ENCODE measurements at regions of chr4 and their contacts with region 1.

Region 1: DNA sequence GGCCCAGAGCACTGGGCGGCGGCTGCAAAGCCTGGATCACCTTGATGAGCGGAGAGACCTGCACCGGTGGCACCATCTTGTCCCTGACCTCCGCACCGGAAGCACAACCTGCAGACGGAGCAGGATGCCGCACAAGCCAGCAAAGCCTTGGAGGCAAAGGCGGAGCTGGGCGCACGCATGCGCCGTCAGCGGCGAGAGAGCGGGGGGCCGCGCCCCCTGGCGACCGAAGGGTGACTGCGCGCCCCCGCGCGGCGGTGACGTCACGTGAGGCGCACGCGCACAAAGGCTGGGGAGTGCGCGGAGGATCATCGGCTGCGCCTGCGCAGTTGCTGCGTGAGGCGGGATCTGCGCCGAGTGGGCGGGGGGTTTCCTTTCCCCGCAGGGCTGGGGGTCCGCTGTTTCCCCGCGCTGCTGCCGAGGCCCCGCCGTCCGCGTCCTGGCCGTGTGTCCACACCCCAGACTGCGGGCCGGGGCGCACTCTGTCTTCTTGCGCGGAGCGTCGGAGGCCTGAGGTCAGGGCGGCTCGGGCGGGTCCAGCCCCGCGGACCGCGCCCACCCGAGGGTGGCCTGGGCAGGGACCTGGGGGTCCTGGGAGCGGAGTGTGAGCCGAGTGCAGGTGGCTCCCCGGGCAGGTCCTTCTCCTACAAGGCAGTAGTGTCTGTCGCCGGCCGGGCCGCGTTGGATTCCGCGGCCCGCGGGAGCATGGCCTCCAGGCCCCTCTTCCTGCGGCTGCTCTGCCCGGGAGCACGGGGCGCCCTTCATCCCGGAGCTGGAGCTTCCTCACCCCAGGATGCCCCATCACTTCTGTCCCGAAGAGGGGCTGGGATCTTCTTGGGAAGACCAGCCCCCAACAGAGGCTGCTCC is at the starts of genes ATP5ME and MYL5:
- DNase-seq: peak; percentile 97 to 100 (median 99)
- ATAC-seq: peak; percentile 96
- H3K4me3 ChIP-seq: peak within 1 kb of the TSS; percentile 88
- H3K4me3 Mint-ChIP-seq: peak within 1 kb of the TSS; percentile 84 to 92 (median 88)
- H3K27ac ChIP-seq: peak within 1 kb of the TSS; percentile 100
- H3K27ac Mint-ChIP-seq: peak within 1 kb of the TSS; percentile 80 to 91 (median 89)
- H3K4me1 ChIP-seq: peaks cover 7 to 16% of the 10 kb centered on the region in 2 donors
- H3K4me1 Mint-ChIP-seq: peaks cover 7 to 15% (median 8%) of the 10 kb centered on the region in 7 donors
- H3K27me3 ChIP-seq: no peaks in the 10 kb centered on the region
- H3K27me3 Mint-ChIP-seq: no peaks in the 10 kb centered on the region
- total RNA-seq, gene ATP5ME: 115 to 183 (median 123) TPM
- total RNA-seq, gene MYL5: 19.9 to 32.7 (median 23.8) TPM

Region 2: DNA sequence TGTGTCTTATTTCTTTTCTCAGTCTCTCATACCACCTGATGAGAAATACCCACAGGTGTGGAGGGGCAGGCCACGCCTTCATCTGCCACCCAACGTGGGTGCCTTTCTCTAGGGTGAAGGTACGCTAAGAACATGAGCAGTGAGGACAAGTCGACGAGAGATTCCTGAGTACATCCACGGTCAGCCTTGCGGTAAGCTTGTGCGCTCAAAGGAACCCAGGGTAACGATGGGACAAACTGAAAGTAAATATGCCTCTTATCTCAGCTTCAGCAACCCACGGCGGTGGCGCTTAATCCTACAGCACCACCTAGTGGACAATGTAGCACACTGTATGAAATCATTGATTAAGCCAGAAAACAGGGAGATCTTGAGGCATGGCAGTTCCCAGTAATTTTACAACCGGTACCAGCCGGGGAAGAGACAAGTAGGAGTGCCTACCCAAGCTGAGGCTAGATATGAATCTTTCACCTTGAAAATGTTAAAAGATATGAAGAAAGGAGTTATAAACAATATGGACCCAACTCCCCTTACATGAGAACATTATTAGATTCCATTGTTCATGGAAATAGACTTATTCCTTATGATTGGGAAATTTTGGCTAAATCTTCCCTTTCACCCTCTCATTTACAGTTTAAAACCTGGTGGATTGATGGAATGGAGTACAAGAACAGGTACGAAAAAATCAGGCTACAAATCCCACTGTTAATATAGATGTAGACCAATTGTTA is 432.1 kb before region 1 on chr4:
- CTCF ChIA-PET with region 1: no interaction called
- POLR2A ChIA-PET with region 1: interaction called, 3 read pairs
- intact Hi-C with region 1: loop called (anchors 1 kb)
- DNase-seq: peak; percentile 43 to 80 (median 71)
- ATAC-seq: peak; percentile 100
- H3K4me3 ChIP-seq: peak overlapping the region; percentile 72
- H3K4me3 Mint-ChIP-seq: peak overlapping the region; percentile 66 to 95 (median 90)
- H3K27ac ChIP-seq: peak overlapping the region; percentile 58
- H3K27ac Mint-ChIP-seq: peak overlapping the region; percentile 80 to 89 (median 85)
- H3K4me1 ChIP-seq: no peaks in the 10 kb centered on the region
- H3K4me1 Mint-ChIP-seq: peaks cover 10 to 13% (median 11%) of the 10 kb centered on the region in 7 donors
- H3K27me3 ChIP-seq: no peaks in the 10 kb centered on the region
- H3K27me3 Mint-ChIP-seq: no peaks in the 10 kb centered on the region

Region 3: DNA sequence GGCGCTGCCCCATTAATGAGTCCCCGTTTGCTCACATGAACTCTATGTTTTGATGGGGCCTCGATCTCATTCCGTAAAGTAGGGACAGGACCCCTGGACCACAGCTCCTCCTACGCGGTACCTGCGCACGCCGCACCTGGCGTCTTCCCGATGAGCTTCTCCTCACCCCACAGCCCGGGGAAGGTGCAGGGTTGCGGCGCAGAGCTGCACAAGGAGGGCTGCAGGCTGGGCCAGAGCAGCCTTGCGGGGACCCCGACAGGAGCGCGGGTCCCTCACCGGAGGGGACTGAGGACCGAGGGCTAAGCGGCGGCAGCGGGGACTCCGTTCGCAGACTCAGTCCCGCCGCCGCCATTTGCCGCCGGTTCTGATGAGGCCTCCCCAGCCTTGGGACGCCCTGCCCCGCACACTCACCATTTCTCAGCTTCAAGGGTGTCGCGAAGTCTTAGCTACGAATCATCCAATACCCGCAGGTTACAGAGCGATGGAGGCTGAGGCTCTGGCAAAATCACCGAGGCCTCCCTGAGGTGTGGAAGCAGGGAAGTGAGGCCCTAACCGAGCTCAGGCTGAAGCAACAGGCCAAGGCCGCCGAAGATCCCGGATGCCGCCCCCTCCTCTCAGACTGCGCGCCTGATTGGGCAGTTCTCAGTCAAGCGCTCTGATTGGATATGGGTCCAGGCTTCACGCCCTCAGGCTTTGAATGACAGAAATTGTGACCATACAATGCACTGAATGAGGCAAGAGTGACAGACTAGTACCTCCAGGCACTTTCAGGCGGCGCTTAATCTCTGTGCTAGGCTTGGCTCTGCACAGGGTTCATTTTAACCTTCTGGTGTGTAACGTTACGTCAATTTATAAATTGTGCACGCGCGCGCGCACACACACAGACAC is 200.6 kb before region 1 on chr4:
- CTCF ChIA-PET with region 1: no interaction called
- POLR2A ChIA-PET with region 1: interaction called, 3 read pairs
- intact Hi-C with region 1: loop called (anchors 1 kb)
- DNase-seq: peak; percentile 78 to 98 (median 96)
- ATAC-seq: peak; percentile 99
- H3K4me3 ChIP-seq: peak overlapping the region; percentile 93
- H3K4me3 Mint-ChIP-seq: peak overlapping the region; percentile 93 to 99 (median 98)
- H3K27ac ChIP-seq: peak overlapping the region; percentile 92
- H3K27ac Mint-ChIP-seq: peak overlapping the region; percentile 98 to 100 (median 100)
- H3K4me1 ChIP-seq: peaks cover 5 to 7% of the 10 kb centered on the region in 2 donors
- H3K4me1 Mint-ChIP-seq: peaks cover 17 to 47% (median 37%) of the 10 kb centered on the region in 7 donors
- H3K27me3 ChIP-seq: no peaks in the 10 kb centered on the region
- H3K27me3 Mint-ChIP-seq: no peaks in the 10 kb centered on the region

Region 4: GRCh38 chr4:650951-651883 is 23.2 kb before region 1 on chr4:
- CTCF ChIA-PET with region 1: no interaction called
- POLR2A ChIA-PET with region 1: no interaction called
- intact Hi-C with region 1: no loop called
- DNase-seq: no peak
- ATAC-seq: no peak
- H3K4me3 ChIP-seq: no peak overlapping the region
- H3K4me3 Mint-ChIP-seq: no peak overlapping the region
- H3K27ac ChIP-seq: no peak overlapping the region
- H3K27ac Mint-ChIP-seq: no peak overlapping the region
- H3K4me1 ChIP-seq: no peaks in the 10 kb centered on the region
- H3K4me1 Mint-ChIP-seq: peaks cover 0 to 5% (median 2%) of the 10 kb centered on the region in 7 donors
- H3K27me3 ChIP-seq: no peaks in the 10 kb centered on the region
- H3K27me3 Mint-ChIP-seq: peaks cover 0 to 27% (median 6%) of the 10 kb centered on the region in 5 donors

Region 5: DNA sequence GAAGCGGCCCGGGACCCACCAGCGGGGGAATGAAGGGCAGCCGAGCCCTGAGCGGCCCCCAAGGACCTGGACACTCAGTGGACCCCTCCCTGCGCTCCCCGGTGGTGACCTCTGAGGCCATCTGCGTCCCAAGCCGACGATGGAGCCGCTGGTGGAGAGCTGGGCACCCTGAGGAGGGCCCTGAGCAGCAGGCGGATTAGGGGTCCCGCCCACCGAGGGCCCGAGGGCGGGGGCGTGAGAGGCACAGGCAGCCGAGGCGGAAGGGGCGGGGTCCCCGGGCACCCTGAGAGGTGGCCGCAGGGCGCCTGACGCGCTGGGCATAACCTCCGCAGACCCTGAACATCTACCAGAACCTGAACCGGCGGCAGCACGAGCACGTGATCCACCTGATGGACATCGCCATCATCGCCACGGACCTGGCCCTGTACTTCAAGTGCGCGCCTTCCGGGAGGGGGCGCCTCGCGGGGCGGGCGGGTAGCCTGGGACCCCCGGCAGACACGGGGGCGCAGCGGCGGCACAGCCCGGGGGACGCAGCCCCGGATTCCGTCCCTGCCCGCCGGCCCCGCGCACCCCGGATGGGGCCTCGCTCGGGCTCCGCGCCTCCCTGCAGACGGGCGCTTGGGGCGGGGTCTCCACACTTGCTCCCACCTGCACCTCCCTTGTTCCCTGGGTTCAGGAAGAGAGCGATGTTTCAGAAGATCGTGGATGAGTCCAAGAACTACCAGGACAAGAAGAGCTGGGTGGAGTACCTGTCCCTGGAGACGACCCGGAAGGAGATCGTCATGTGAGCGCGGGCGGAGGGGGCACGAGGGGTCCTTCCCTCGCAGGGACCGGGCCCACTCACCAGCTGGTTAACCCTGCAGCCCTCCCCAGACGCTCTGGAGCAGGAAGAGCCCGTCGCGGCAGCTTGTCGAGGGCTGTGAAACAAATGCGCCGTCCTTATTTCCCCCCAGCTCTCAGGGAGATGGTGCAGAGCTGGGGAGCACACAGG is 10.7 kb before region 1 on chr4:
- CTCF ChIA-PET with region 1: interaction called, 3 read pairs
- POLR2A ChIA-PET with region 1: interaction called, 46 read pairs
- intact Hi-C with region 1: loop called (anchors 1 kb)
- DNase-seq: peak; percentile 59 to 77 (median 75)
- ATAC-seq: peak; percentile 91
- H3K4me3 ChIP-seq: peak overlapping the region; percentile 86
- H3K4me3 Mint-ChIP-seq: peak overlapping the region; percentile 72 to 95 (median 86)
- H3K27ac ChIP-seq: peak overlapping the region; percentile 90
- H3K27ac Mint-ChIP-seq: peak overlapping the region; percentile 48 to 93 (median 89)
- H3K4me1 ChIP-seq: peaks cover 4 to 5% of the 10 kb centered on the region in 2 donors
- H3K4me1 Mint-ChIP-seq: peaks cover 3 to 33% (median 13%) of the 10 kb centered on the region in 7 donors
- H3K27me3 ChIP-seq: no peaks in the 10 kb centered on the region
- H3K27me3 Mint-ChIP-seq: no peaks in the 10 kb centered on the region

Region 6: GRCh38 chr4:973431-974397 is 299.3 kb after region 1 on chr4 and contains the start of gene DGKQ:
- CTCF ChIA-PET with region 1: no interaction called
- POLR2A ChIA-PET with region 1: no interaction called
- intact Hi-C with region 1: loop called in 1 of 2 experiments (anchors 1 kb)
- DNase-seq: peak; percentile 68 to 93 (median 83)
- ATAC-seq: peak; percentile 96
- H3K4me3 ChIP-seq: peak within 1 kb of the TSS; percentile 56
- H3K4me3 Mint-ChIP-seq: peak within 1 kb of the TSS; percentile 19 to 75 (median 56)
- H3K27ac ChIP-seq: peak within 1 kb of the TSS; percentile 72
- H3K27ac Mint-ChIP-seq: no peak within 1 kb of the TSS
- H3K4me1 ChIP-seq: peaks cover 13 to 26% of the 10 kb centered on the region in 2 donors
- H3K4me1 Mint-ChIP-seq: peaks cover 0 to 17% (median 10%) of the 10 kb centered on the region in 7 donors
- H3K27me3 ChIP-seq: no peaks in the 10 kb centered on the region
- H3K27me3 Mint-ChIP-seq: no peaks in the 10 kb centered on the region
- total RNA-seq, gene DGKQ: 14.9 to 28.0 (median 22.7) TPM

Region 7: GRCh38 chr4:1018147-1019020 is 344.0 kb after region 1 on chr4:
- CTCF ChIA-PET with region 1: no interaction called
- POLR2A ChIA-PET with region 1: no interaction called
- intact Hi-C with region 1: no loop called
- DNase-seq: no peak
- ATAC-seq: no peak
- H3K4me3 ChIP-seq: no peak overlapping the region
- H3K4me3 Mint-ChIP-seq: peak overlapping the region in 1 of 10 donors; percentile 29
- H3K27ac ChIP-seq: no peak overlapping the region
- H3K27ac Mint-ChIP-seq: peak overlapping the region in 1 of 9 donors; percentile 36
- H3K4me1 ChIP-seq: no peaks in the 10 kb centered on the region
- H3K4me1 Mint-ChIP-seq: peaks cover 5 to 13% (median 6%) of the 10 kb centered on the region in 7 donors
- H3K27me3 ChIP-seq: no peaks in the 10 kb centered on the region
- H3K27me3 Mint-ChIP-seq: no peaks in the 10 kb centered on the region